ENCODE measurements at regions of chr15 and their contacts with region 1.

Region 1: GRCh38 chr15:78241007-78241406 is 6.6 kb upstream of the ACSBG1 start:
- DNase-seq: peak; percentile 77 to 92 (median 89)
- H3K4me3 ChIP-seq: no peak overlapping the region
- H3K27ac ChIP-seq: peak overlapping the region in 5 of 59 donors; percentile 14 to 55 (median 44)
- H3K27me3 ChIP-seq: peaks cover 0 to 4% (median 0%) of the 10 kb centered on the region in 45 donors
- CTCF ChIP-seq: peak; percentile 44 to 98 (median 91)

Region 2: GRCh38 chr15:77959432-77959879 is 281.6 kb before region 1 on chr15:
- intact Hi-C with region 1: loop called in 1 of 2 experiments (anchors 2 kb)
- DNase-seq: peak in 9 of 10 donors; percentile 68 to 84 (median 75)
- H3K4me3 ChIP-seq: peak overlapping the region in 52 of 59 donors; percentile 9 to 61 (median 40)
- H3K27ac ChIP-seq: no peak overlapping the region
- H3K27me3 ChIP-seq: no peaks in the 10 kb centered on the region
- CTCF ChIP-seq: peak; percentile 82 to 98 (median 94)

Region 3: DNA sequence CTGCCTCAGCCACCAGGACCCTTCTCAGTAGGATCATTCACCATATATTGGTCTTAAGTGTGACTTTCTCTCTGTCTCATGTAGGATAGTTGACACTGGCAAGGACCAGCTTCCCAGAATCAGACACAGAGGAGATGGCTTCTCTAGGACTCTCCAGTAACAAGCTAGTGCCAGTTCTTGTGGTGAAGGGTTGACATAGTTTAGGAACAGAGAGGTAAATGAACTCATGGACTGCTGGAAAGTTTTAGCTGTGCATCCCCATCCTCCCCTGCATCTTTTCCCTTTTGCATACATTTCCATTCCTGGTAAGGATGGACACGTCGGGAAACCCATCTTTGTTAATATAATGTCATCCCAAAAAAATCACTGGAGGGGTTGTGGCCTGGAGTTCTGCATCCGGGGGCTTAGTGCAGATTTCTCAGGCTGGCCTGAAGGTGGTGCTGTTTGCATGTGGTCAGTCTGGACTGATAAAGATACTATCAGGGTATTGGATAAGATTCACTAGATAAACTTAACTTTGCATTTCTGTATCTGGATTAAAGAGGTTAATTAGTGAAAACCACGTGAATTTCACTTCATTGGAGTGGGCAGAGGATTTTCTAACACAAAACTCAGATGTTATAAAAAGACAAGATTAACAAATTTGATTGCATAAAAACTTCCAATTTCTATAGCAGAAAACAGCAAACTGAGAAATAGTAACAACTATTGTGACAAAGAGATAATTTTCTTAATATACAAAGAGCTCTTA is 274.3 kb before region 1 on chr15:
- intact Hi-C with region 1: loop called (anchors 2 to 5 kb)
- DNase-seq: peak in 7 of 10 donors; percentile 44 to 75 (median 64)
- H3K4me3 ChIP-seq: no peak overlapping the region
- H3K27ac ChIP-seq: no peak overlapping the region
- H3K27me3 ChIP-seq: no peaks in the 10 kb centered on the region
- CTCF ChIP-seq: peak; percentile 70 to 97 (median 89)

Region 4: GRCh38 chr15:78131295-78132061 is 109.5 kb before region 1 on chr15 and contains the start of gene CIB2:
- intact Hi-C with region 1: loop called (anchors 5 kb)
- DNase-seq: peak in 6 of 10 donors; percentile 39 to 81 (median 56)
- H3K4me3 ChIP-seq: peak within 1 kb of the TSS; percentile 63 to 98 (median 84)
- H3K27ac ChIP-seq: peak within 1 kb of the TSS in 51 of 59 donors; percentile 17 to 93 (median 64)
- H3K27me3 ChIP-seq: no peaks in the 10 kb centered on the region
- CTCF ChIP-seq: peak in 55 of 56 donors; percentile 34 to 88 (median 70)
- total RNA-seq, gene CIB2: 4.3 to 20.5 (median 10.0) TPM

Region 5: GRCh38 chr15:78177447-78177873 is 63.5 kb before region 1 on chr15:
- intact Hi-C with region 1: loop called (anchors 2 to 5 kb)
- DNase-seq: peak in 6 of 10 donors; percentile 41 to 73 (median 56)
- H3K4me3 ChIP-seq: peak overlapping the region in 1 of 59 donors; percentile 8
- H3K27ac ChIP-seq: peak overlapping the region in 1 of 59 donors; percentile 43
- H3K27me3 ChIP-seq: no peaks in the 10 kb centered on the region
- CTCF ChIP-seq: peak in 55 of 56 donors; percentile 28 to 90 (median 71)